ENCODE measurements at regions of chr4 and their contacts with region 1.

Region 1: GRCh38 chr4:22389240-22389870 is 126.5 kb downstream of the ADGRA3 start:
- DNase-seq: peak; percentile 33
- H3K4me3 ChIP-seq: no peak overlapping the region
- H3K27me3 ChIP-seq: no peaks in the 10 kb centered on the region
- CTCF ChIP-seq: peak; percentile 85

Region 2: DNA sequence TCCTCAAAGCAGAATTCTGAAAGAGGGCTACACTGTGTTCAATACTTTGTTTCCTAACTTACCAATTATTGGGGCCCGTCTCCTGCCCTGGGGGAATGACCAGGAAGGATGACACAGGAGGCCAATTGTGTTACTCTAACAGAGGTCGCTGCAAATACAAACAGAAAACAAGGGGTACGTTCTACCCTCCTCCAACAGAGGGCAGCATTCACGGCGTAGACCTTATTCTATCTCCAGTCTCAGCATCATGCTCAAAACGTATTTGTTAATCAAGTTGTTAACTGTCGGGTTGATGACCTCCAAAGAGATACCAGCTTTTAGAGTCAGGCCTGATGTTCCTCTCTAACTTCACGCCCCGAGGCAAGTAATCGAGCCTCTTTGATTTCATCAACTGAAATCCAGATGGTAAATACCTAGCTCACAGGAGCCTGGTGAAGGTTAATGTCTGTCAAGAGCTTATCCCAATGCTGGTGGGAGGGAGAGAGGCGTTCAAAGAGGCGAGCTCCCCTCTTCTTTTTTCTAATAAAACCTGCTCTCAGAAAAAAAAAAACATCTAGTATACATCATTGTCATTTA is 259.8 kb before region 1 on chr4:
- CTCF ChIA-PET with region 1: interaction called, 17 read pairs
- POLR2A ChIA-PET with region 1: no interaction called
- DNase-seq: peak; percentile 1
- H3K4me3 ChIP-seq: no peak overlapping the region
- H3K27me3 ChIP-seq: no peaks in the 10 kb centered on the region; the same call in 1 of the 2 replicates
- CTCF ChIP-seq: peak; percentile 77

Region 3: GRCh38 chr4:22356987-22357596 is 32.3 kb before region 1 on chr4:
- CTCF ChIA-PET with region 1: interaction called, 13 read pairs
- POLR2A ChIA-PET with region 1: no interaction called
- DNase-seq: no peak
- H3K4me3 ChIP-seq: no peak overlapping the region
- H3K27me3 ChIP-seq: no peaks in the 10 kb centered on the region
- CTCF ChIP-seq: peak; percentile 50

Region 4: DNA sequence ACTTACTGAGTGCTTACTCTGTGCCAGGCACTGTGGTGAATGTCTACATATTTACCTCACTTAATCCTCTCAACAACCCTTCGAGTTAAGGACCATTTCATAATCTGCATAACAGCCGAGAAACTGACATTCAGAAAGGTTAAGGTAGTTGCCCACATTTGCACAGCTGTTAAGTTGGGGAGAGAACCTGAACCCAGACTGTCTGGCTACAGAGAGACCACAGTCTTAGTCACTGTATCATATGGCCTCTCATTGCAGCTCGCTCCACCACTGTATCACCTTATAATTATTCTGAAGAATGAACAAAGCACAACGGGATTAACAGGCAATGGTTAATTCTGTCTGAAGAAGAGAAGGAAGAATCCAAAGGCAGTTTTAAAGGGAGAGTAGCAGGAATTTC is 28.1 kb after region 1 on chr4:
- CTCF ChIA-PET with region 1: no interaction called
- POLR2A ChIA-PET with region 1: no interaction called
- DNase-seq: no peak
- H3K4me3 ChIP-seq: no peak overlapping the region
- H3K27me3 ChIP-seq: no peaks in the 10 kb centered on the region
- CTCF ChIP-seq: no peak